B cell (primary cell): ENCODE measurements at regions of chr1 and their contacts with region 1.

Region 1: GRCh38 chr1:40338745-40339424 is 21.8 kb upstream of the COL9A2 start:
- DNase-seq: peak; percentile 92
- ATAC-seq: peak; percentile 98
- H3K4me3 ChIP-seq: peak overlapping the region in 3 of 5 experiments; percentile 3 to 46 (median 6)
- H3K4me3 Mint-ChIP-seq: peak overlapping the region; percentile 38
- H3K27ac ChIP-seq: no peak overlapping the region
- H3K27ac Mint-ChIP-seq: peak overlapping the region; percentile 28
- H3K4me1 ChIP-seq: peaks cover 25 to 34% of the 10 kb centered on the region in 2 donors
- H3K4me1 Mint-ChIP-seq: peaks cover 39% of the 10 kb centered on the region
- H3K27me3 ChIP-seq: no peaks in the 10 kb centered on the region
- H3K27me3 Mint-ChIP-seq: no peaks in the 10 kb centered on the region
- CTCF ChIP-seq: peak; percentile 98

Region 2: DNA sequence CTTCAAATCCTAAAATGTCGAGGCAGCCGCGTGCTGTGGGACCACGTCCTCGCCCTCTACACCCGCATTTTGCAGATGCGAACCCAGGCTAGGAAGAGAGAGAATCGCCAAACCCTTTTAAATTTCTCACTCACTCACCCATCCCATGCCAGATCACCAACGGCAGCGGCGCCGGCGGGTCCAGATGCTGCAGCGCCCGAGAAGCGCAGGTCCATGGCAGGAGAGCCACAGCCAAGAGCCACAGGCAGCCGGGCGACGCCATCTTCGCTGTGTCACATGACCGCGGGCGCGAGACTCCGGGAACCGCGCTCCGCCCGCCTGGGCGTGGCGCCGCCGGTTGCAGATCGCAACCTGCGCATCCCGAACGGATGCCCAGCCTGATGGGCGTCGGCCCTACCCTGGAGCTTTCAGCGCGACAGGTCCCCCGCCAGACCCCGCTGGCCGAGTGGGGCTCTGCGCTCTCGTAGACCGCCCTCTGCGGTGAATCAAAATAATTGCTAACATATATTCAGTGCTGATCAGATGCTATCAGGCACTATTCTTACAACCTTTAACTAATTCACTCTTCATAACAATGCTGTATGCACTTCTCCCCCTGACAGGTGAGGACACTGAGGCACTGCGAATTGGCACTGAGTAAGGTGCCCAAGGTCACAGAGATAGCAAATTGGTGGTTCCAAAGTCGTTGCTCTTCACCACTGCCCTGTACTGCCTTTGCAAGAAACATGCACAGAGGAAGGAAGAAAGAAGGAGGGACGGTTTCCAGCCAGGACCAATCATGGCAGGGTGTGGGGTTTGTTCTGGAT is 241.7 kb before region 1 on chr1 and contains the start of gene PPT1:
- CTCF ChIA-PET with region 1: interaction called, 13 read pairs
- POLR2A ChIA-PET with region 1: no interaction called
- intact Hi-C with region 1: no loop called
- DNase-seq: peak; percentile 86
- ATAC-seq: peak; percentile 92
- H3K4me3 ChIP-seq: peak within 1 kb of the TSS; percentile 69 to 80 (median 79)
- H3K4me3 Mint-ChIP-seq: peak within 1 kb of the TSS; percentile 88
- H3K27ac ChIP-seq: peak within 1 kb of the TSS; percentile 53 to 68
- H3K27ac Mint-ChIP-seq: peak within 1 kb of the TSS; percentile 92
- H3K4me1 ChIP-seq: peaks cover 14 to 20% of the 10 kb centered on the region in 2 donors
- H3K4me1 Mint-ChIP-seq: peaks cover 19% of the 10 kb centered on the region
- H3K27me3 ChIP-seq: no peaks in the 10 kb centered on the region
- H3K27me3 Mint-ChIP-seq: peaks cover 15% of the 10 kb centered on the region
- CTCF ChIP-seq: peak; percentile 61
- total RNA-seq, gene PPT1: 32.1 and 38.2 TPM in 2 replicates

Region 3: DNA sequence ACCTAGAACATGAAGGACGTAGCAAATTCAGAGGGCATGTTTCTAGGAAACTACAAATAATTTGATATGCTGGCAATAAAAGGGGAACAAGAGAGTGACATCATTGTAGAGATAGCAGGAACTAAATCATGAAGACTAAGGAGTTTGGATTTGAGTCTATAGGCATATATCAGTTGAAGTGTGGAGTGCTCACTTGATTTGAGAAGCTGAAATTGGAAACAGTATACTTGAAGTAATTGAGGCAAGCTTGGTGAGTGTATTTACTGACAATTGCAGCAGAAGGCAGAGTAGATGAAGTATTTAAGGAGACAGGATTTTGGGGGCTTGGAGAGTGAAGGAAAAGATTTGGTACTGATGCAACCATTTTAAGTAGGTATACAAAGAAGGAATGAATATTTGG is 97.5 kb before region 1 on chr1:
- CTCF ChIA-PET with region 1: interaction called, 13 read pairs
- POLR2A ChIA-PET with region 1: no interaction called
- intact Hi-C with region 1: no loop called
- DNase-seq: no peak
- ATAC-seq: no peak
- H3K4me3 ChIP-seq: no peak overlapping the region
- H3K4me3 Mint-ChIP-seq: no peak overlapping the region
- H3K27ac ChIP-seq: no peak overlapping the region
- H3K27ac Mint-ChIP-seq: peak overlapping the region; percentile 4
- H3K4me1 ChIP-seq: no peaks in the 10 kb centered on the region
- H3K4me1 Mint-ChIP-seq: peaks cover 8% of the 10 kb centered on the region
- H3K27me3 ChIP-seq: no peaks in the 10 kb centered on the region
- H3K27me3 Mint-ChIP-seq: no peaks in the 10 kb centered on the region
- CTCF ChIP-seq: no peak

Region 4: DNA sequence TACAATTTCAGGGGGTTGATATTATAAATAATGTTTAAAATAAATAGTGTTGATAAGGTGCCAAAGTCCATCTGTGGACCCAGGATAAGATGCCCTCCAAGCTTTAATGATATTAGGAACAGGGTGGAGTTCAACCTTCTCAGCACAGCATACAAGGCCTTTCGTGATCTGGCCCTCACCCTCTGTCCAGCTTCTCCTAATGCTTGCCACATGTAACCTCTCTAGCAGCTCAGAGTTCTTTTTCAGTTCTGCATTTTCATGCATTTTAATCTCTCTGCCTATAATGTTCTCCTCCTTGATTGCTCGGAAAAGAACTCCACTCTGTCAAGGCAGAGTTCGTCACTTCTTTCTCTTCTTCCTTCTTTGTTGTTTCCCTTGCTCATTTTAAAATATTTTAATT is 13.2 kb after region 1 on chr1:
- CTCF ChIA-PET with region 1: interaction called, 24 read pairs
- POLR2A ChIA-PET with region 1: no interaction called
- intact Hi-C with region 1: no loop called
- DNase-seq: peak; percentile 58
- ATAC-seq: peak; percentile 95
- H3K4me3 ChIP-seq: no peak overlapping the region
- H3K4me3 Mint-ChIP-seq: peak overlapping the region; percentile 41
- H3K27ac ChIP-seq: peak overlapping the region; percentile 32 to 57
- H3K27ac Mint-ChIP-seq: peak overlapping the region; percentile 87
- H3K4me1 ChIP-seq: peaks cover 37 to 41% of the 10 kb centered on the region in 2 donors
- H3K4me1 Mint-ChIP-seq: peaks cover 52% of the 10 kb centered on the region
- H3K27me3 ChIP-seq: no peaks in the 10 kb centered on the region
- H3K27me3 Mint-ChIP-seq: no peaks in the 10 kb centered on the region
- CTCF ChIP-seq: no peak

Region 5: GRCh38 chr1:40394491-40395172 is 55.7 kb after region 1 on chr1:
- CTCF ChIA-PET with region 1: interaction called, 304 read pairs
- POLR2A ChIA-PET with region 1: interaction called, 3 read pairs
- intact Hi-C with region 1: no loop called
- DNase-seq: peak; percentile 58
- ATAC-seq: peak; percentile 32
- H3K4me3 ChIP-seq: peak overlapping the region in 1 of 5 experiments; percentile 35
- H3K4me3 Mint-ChIP-seq: peak overlapping the region; percentile 76
- H3K27ac ChIP-seq: peak overlapping the region; percentile 99 to 100
- H3K27ac Mint-ChIP-seq: peak overlapping the region; percentile 93
- H3K4me1 ChIP-seq: peaks cover 96 to 99% of the 10 kb centered on the region in 2 donors
- H3K4me1 Mint-ChIP-seq: peaks cover 91% of the 10 kb centered on the region
- H3K27me3 ChIP-seq: no peaks in the 10 kb centered on the region
- H3K27me3 Mint-ChIP-seq: no peaks in the 10 kb centered on the region
- CTCF ChIP-seq: no peak

Region 6: GRCh38 chr1:40438391-40439015 is 99.6 kb after region 1 on chr1:
- CTCF ChIA-PET with region 1: interaction called, 17 read pairs
- POLR2A ChIA-PET with region 1: no interaction called
- intact Hi-C with region 1: loop called (anchors 1 kb)
- DNase-seq: peak; percentile 63
- ATAC-seq: peak; percentile 64
- H3K4me3 ChIP-seq: no peak overlapping the region
- H3K4me3 Mint-ChIP-seq: no peak overlapping the region
- H3K27ac ChIP-seq: no peak overlapping the region
- H3K27ac Mint-ChIP-seq: no peak overlapping the region
- H3K4me1 ChIP-seq: no peaks in the 10 kb centered on the region
- H3K4me1 Mint-ChIP-seq: peaks cover 2% of the 10 kb centered on the region
- H3K27me3 ChIP-seq: no peaks in the 10 kb centered on the region
- H3K27me3 Mint-ChIP-seq: no peaks in the 10 kb centered on the region
- CTCF ChIP-seq: peak; percentile 83

Region 7: DNA sequence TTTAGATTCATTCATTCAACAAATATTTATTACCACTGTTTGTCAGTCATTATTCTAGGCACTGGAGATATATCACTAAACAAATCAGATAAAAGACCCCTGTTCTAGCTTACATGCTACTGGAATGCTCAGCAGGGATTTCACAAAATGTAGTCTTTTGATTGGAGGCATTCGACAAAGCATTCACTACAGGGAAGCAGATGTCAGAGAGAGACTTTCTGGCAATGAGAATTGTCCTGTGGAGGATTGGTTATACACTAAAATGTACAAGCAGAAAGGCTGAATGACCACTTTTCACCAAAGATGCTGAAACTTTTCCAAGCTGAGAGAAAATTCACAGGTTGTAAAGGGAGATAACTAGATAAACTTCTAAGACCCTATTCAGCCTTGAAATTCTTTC is 845.6 kb after region 1 on chr1:
- CTCF ChIA-PET with region 1: no interaction called
- POLR2A ChIA-PET with region 1: no interaction called
- intact Hi-C with region 1: no loop called
- DNase-seq: no peak
- ATAC-seq: no peak
- H3K4me3 ChIP-seq: no peak overlapping the region
- H3K4me3 Mint-ChIP-seq: no peak overlapping the region
- H3K27ac ChIP-seq: no peak overlapping the region
- H3K27ac Mint-ChIP-seq: no peak overlapping the region
- H3K4me1 ChIP-seq: peaks cover 0 to 8% of the 10 kb centered on the region in 2 donors
- H3K4me1 Mint-ChIP-seq: peaks cover 15% of the 10 kb centered on the region
- H3K27me3 ChIP-seq: no peaks in the 10 kb centered on the region
- H3K27me3 Mint-ChIP-seq: no peaks in the 10 kb centered on the region
- CTCF ChIP-seq: no peak